ENCODE measurements at regions of chr1 and their contacts with region 1.

Region 1: DNA sequence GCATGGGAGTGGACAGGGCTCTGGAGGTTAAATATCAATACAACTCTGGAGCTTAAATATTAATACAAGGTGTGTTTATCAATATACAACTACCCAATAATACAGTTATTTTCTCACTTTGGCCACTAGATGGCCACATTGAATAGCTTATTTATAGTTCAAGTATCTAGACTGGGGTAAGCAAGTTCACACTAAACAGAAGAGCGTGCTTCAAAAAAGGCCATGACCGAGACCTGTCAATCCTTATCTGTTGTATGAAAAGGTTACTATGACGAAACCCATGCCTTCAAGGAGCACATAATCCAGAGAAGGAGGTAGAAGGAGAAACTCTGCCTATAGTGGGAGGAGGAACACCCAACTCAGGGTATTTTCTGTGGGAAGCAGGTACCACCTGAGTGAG is 29.1 kb downstream of the CHML start:
- DNase-seq: peak; percentile 56
- H3K4me3 ChIP-seq: no peak overlapping the region
- CTCF ChIP-seq: peak; percentile 41

Region 2: DNA sequence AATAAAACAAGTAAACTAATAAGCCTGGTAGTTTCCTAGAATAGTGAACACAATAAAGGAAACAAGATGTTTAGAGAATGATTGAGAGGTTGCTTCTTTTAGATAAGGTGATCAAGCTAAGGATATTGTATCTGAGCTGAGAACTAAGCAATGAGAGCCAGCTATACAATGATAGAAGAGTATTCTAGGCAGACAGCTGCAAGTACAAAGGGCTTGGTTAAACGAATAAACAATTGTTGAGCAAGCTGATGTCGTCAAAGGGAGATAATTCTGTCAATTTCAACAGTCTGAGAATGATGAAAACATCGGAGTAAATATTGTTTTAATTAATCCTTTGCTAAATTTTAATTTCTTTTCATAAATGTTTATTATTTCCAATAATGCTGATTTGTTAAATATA is 86.0 kb before region 1 on chr1:
- in situ Hi-C with region 1: loop called (anchors 5 kb)
- DNase-seq: no peak
- H3K4me3 ChIP-seq: no peak overlapping the region
- CTCF ChIP-seq: no peak

Region 3: GRCh38 chr1:241560146-241560848 is 50.8 kb before region 1 on chr1:
- in situ Hi-C with region 1: no loop called
- DNase-seq: no peak
- H3K4me3 ChIP-seq: no peak overlapping the region
- CTCF ChIP-seq: no peak

Region 4: DNA sequence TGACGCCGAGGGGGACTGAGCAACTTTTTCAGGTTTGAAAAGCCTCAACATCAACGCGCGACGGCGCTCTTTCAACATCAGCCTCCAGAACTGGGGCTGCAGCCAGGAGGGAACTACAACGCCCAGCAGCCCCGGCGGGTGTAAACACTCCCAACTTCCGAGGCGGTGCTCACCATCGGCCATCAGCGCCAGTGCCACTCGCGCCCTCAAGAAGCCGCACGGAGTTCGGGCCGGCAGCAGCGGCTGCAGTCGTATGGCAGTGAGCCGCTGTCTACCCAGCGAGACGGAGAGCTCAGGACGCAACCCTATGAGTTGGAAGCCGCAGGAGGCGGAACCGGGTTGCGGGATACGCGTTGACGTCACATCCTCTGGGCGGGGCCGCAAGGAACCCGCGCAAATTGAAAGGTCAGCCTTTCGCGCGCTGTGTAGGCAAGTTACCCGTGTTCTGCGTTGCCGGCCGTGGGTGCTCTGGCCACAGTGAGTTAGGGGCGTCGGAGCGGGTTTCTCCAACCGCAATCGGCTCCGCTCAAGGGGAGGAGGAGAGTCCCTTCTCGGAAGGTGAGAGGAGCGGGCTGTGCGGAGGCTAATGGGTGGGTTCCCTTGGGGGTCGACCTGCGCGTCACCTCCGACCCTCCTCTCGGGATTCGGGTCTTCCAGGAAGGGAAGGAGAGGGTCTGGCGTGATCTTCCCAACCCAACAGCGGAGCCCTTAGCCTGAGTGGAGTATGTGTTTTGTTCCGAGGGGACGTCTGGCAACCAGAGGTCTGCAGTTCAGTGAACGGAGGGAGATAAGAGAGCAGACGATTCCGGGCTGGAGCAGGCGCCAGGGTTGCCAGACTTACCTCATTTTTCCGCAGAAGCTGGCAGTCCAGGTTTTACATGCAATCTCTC is 237.0 kb after region 1 on chr1 and contains the start of gene EXO1:
- in situ Hi-C with region 1: loop called (anchors 10 kb)
- DNase-seq: peak; percentile 83
- H3K4me3 ChIP-seq: peak within 1 kb of the TSS; percentile 93
- CTCF ChIP-seq: peak; percentile 48

Measured in astrocyte of the cerebellum (primary cell).